ENCODE measurements at regions of chr18 and their contacts with region 1.

Region 1: DNA sequence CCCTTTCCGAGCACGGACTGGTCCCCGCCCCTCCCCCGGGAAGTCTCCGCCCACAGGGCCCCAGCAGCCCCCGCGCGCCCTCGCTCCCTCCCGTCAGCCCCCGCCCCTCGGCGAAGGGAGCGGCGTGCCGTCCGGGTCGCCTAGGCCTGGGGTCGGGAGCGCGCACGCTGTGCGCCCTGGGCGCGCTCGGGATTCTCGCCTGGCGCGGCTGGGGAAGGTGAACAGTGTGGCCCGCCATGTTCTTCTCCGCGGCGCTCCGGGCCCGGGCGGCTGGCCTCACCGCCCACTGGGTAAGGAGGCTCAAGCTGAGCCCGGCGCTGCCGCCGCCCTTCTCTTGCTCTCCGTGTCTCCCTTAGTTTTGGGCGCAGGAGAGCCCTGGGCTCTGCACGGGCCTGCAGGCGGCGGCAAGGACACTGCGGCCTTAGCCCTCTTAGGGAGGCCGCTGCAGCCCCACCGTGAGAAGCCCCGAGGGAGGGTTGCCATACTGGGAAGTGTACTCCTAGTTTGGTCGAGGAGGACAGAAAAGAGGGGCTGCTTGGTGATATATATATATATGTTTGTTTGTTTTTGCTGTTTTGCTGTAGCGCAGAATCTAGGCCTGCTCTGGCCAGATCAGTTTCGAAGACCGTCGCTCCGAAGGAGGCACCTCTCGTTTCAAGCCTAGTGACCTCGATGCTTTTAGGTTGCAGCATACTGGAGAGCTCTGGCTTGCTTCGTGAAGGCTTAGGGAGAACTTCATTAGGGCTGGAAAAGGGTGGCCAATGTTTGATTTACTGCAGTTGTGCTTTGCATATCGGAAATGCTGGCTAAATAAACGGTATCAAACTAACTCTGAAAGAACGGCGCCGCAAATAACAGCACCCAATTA is at the start of gene NDUFV2:
- DNase-seq: peak; percentile 97
- H3K4me3 ChIP-seq: peak within 1 kb of the TSS; percentile 79 to 87
- H3K27ac ChIP-seq: peak within 1 kb of the TSS; percentile 93 to 97
- H3K4me1 ChIP-seq: peaks cover 42% of the 10 kb centered on the region
- H3K27me3 ChIP-seq: no peaks in the 10 kb centered on the region
- CTCF ChIP-seq: no peak
- POLR2A ChIP-seq: peak; percentile 67
- total RNA-seq, gene NDUFV2: 115 to 120 TPM

Region 2: DNA sequence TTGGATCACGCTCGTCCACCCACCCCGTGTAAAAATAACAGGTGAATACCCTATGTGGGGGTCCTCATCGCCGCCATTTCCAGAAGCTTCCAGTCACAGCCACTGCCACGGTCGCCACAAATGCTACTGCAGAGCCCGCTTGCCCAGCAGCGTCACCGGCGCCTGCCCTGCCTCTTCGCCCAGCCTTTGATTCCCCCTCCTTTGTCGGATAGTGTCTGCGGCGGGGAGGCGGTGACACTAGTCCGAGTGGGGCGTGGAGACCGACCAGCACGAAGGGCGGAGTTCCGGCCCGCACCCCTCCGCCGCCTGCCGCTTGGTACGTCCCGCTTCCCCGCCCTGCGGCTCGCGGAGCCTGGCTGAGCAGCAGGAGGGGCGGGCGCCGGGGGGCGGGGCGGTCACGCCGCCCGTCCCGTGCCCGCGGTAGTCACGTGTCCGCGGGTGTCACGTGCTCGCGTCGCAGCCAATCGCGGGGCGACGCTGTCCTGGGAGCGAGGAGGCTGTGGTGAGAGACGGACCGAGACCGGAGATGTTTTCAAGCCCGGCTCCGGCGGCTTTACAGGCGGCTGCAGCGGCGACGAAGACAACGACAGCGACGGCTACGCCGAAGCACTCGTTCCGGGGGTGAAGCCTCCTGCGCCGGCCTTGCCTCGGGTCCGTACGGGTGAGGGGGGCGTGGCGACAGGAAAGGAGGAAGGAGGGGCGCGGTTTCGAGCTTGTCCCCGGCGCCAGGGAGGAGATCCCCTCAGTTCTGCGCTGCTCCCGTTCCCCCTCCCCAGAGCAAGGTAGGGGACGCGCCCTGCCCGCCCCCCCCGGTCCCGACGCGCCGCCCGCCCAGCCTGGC is 33.8 kb after region 1 on chr18 and contains the start of gene ANKRD12:
- intact Hi-C with region 1: loop called (anchors 1 kb)
- DNase-seq: peak; percentile 96
- H3K4me3 ChIP-seq: peak within 1 kb of the TSS; percentile 89 to 93
- H3K27ac ChIP-seq: peak within 1 kb of the TSS; percentile 99
- H3K4me1 ChIP-seq: peaks cover 16% of the 10 kb centered on the region
- H3K27me3 ChIP-seq: no peaks in the 10 kb centered on the region
- CTCF ChIP-seq: peak in 1 of 3 experiments; percentile 8
- POLR2A ChIP-seq: peak; percentile 61
- total RNA-seq, gene ANKRD12: 58.5 to 59.7 TPM